ENCODE measurements at regions of chr15 and their contacts with region 1.

Region 1: DNA sequence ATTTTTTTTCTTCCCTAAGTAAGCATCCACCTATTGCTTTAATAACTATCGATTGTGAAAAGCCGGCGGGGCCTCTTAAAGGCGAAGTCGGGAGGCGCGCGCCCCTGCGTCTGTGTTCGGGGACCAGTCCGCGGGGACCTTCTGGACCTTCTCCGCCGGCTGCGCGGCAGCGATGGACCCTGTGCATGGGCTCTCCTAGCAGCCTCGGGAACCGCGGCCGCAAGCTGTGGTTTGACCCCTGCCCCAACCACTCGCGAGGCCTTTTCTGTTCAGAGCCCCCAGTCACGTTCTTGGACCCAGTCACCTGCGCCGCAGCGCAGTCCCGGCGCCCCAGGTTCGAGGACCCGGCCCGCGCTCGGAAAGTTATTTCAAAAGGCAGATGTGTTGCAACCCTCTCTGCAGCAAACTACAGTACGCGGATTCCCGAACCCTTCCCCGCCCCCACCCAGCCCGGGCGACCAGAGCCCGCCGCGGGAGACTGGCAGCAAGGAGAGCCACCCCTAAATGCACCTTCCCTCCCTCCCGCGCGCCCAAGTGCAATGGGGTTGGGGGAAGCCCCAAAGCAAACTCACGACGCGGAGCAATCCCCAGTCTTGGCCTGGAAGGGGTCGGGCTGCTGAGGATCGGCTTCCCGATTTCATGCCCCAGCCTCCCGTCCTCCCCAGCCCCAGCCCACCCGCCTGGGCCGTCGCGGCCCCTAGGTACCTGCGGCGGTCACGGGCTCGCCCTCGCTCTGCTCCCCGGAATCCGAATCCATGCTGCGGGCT is 684 bp downstream of the TNFAIP8L3 start:
- DNase-seq: peak in 1 of 9 donors; percentile 28
- ATAC-seq: no peak
- H3K4me3 ChIP-seq: no peak overlapping the region
- H3K4me3 Mint-ChIP-seq: peak overlapping the region in 7 of 10 donors; percentile 29 to 62 (median 51)
- H3K27ac ChIP-seq: no peak overlapping the region
- H3K27ac Mint-ChIP-seq: no peak overlapping the region
- H3K4me1 ChIP-seq: no peaks in the 10 kb centered on the region
- H3K4me1 Mint-ChIP-seq: peaks cover 0 to 11% (median 4%) of the 10 kb centered on the region in 7 donors
- H3K27me3 ChIP-seq: peaks cover 0 to 3% of the 10 kb centered on the region in 2 donors
- H3K27me3 Mint-ChIP-seq: peaks cover 54 to 91% (median 71%) of the 10 kb centered on the region in 5 donors

Region 2: DNA sequence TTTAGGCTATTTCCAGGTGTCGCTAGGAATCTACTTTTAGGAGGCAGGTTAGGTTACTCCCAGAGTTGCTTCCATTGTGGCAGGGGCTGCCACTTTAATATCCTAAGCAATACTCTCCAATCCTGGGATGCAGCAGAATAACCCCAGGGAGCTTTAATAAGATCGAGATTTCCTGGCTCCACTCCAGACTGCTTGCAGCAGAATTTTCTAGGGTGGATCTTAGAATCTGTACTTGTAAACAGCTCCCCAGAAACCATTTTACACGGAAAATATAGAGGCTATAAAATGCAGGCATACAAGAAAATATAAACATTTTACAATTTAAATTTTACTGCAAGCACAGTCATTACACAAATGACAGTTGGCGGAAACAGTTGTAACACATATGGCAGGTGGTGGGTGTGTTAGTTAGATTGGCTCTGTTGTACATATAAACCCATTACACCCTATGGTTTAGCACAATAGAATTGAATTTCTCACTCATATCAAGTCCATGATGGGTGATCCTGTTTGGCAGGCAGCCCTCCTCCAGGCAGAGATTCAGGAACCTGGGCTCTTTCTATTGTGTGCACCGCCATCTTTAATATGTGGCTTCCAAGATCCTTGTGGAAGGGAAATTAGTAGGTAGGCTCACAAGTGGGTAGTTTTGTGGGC is 35.6 kb after region 1 on chr15:
- CTCF ChIA-PET with region 1: no interaction called
- POLR2A ChIA-PET with region 1: no interaction called
- intact Hi-C with region 1: no loop called
- DNase-seq: no peak
- ATAC-seq: no peak
- H3K4me3 ChIP-seq: no peak overlapping the region
- H3K4me3 Mint-ChIP-seq: no peak overlapping the region
- H3K27ac ChIP-seq: no peak overlapping the region
- H3K27ac Mint-ChIP-seq: no peak overlapping the region
- H3K4me1 ChIP-seq: no peaks in the 10 kb centered on the region
- H3K4me1 Mint-ChIP-seq: peaks cover 0 to 9% (median 0%) of the 10 kb centered on the region in 7 donors
- H3K27me3 ChIP-seq: no peaks in the 10 kb centered on the region
- H3K27me3 Mint-ChIP-seq: peaks cover 15 to 39% (median 34%) of the 10 kb centered on the region in 5 donors

Region 3: DNA sequence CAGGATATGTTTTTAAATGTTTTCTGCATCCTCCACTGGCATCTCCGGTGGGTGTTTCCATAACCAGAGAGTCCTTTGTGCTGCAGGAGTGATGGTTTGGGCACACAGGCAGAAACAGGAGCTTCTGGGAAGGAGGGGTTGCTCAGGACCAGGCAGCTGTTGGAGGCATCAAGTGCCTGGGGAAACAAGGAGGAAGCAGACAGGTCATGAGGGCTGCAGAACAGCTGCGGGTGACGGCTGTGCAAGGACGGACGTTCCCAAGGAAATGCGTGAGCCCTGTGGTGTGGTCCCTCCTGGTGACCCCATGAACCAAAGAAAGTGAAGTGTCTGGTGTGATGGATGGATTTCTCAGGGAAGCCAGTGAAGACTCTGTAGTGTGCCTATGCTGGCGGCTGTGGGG is 61.9 kb after region 1 on chr15:
- CTCF ChIA-PET with region 1: no interaction called
- POLR2A ChIA-PET with region 1: no interaction called
- intact Hi-C with region 1: loop called in 1 of 2 experiments (anchors 10 kb)
- DNase-seq: no peak
- ATAC-seq: no peak
- H3K4me3 ChIP-seq: no peak overlapping the region
- H3K4me3 Mint-ChIP-seq: no peak overlapping the region
- H3K27ac ChIP-seq: no peak overlapping the region
- H3K27ac Mint-ChIP-seq: no peak overlapping the region
- H3K4me1 ChIP-seq: no peaks in the 10 kb centered on the region
- H3K4me1 Mint-ChIP-seq: no peaks in the 10 kb centered on the region
- H3K27me3 ChIP-seq: no peaks in the 10 kb centered on the region
- H3K27me3 Mint-ChIP-seq: peaks cover 4 to 24% (median 8%) of the 10 kb centered on the region in 5 donors

Region 4: GRCh38 chr15:51192521-51193280 is 98.7 kb after region 1 on chr15:
- CTCF ChIA-PET with region 1: no interaction called
- POLR2A ChIA-PET with region 1: no interaction called
- intact Hi-C with region 1: no loop called
- DNase-seq: peak; percentile 9 to 81 (median 45)
- ATAC-seq: peak; percentile 80
- H3K4me3 ChIP-seq: no peak overlapping the region
- H3K4me3 Mint-ChIP-seq: no peak overlapping the region
- H3K27ac ChIP-seq: no peak overlapping the region
- H3K27ac Mint-ChIP-seq: peak overlapping the region in 1 of 9 donors; percentile 41
- H3K4me1 ChIP-seq: no peaks in the 10 kb centered on the region
- H3K4me1 Mint-ChIP-seq: peaks cover 0 to 4% (median 0%) of the 10 kb centered on the region in 7 donors
- H3K27me3 ChIP-seq: peaks cover 2 to 3% of the 10 kb centered on the region in 2 donors
- H3K27me3 Mint-ChIP-seq: peaks cover 26 to 61% (median 49%) of the 10 kb centered on the region in 5 donors